ENCODE measurements at regions of chr20 and their contacts with region 1.

Region 1: DNA sequence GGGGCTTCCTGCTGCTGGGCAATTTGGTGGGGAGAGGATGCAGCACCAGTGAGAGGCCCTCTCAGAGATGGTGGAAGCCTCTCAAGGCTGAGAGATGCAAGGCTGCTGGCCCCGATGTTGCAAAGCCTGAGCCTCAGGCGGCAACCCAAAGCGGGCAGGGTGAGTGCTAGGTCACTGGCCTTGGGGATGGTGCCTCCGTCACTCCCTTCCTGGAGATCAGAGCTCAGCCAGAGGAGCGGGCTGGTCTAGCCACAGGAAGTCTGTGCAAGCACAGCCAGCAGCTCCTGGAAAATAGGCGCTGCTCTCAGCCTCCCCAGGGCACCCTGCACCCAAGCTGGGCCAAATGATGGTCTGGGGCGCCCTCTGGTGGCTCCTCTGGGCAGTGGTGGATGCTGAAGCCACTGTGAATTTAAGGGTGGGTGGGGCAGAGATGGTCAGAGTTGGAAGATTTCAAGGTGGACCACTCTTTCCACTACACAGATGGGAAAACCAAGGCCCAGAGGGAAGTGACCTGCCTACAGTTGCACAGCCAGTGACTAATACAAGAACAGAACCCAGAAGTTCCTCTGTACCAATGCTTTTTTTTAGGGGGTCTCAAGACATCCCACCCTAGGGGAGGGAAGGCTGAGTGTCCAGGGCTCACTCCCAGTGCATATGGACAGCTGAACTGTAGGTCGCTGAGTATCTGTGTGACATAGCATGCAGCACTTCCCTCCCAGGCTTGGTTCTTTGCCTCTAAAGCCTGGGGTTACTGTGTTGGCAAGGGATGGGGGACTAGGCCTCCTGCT is 20.8 kb downstream of the C20orf203 start:
- DNase-seq: peak; percentile 96
- H3K4me3 Mint-ChIP-seq: no peak overlapping the region
- H3K27ac Mint-ChIP-seq: no peak overlapping the region
- H3K4me1 Mint-ChIP-seq: peaks cover 7% of the 10 kb centered on the region
- H3K27me3 Mint-ChIP-seq: no peaks in the 10 kb centered on the region

Region 2: GRCh38 chr20:32521780-32522525 is 131.0 kb before region 1 on chr20:
- intact Hi-C with region 1: loop called (anchors 1 kb)
- DNase-seq: peak; percentile 91
- H3K4me3 Mint-ChIP-seq: peak overlapping the region; percentile 15
- H3K27ac Mint-ChIP-seq: peak overlapping the region; percentile 60
- H3K4me1 Mint-ChIP-seq: peaks cover 46% of the 10 kb centered on the region
- H3K27me3 Mint-ChIP-seq: no peaks in the 10 kb centered on the region

Region 3: GRCh38 chr20:32585011-32585518 is 67.9 kb before region 1 on chr20 and contains the start of gene NOL4L:
- intact Hi-C with region 1: loop called (anchors 5 kb)
- DNase-seq: peak; percentile 79
- H3K4me3 Mint-ChIP-seq: peak within 1 kb of the TSS; percentile 81
- H3K27ac Mint-ChIP-seq: peak within 1 kb of the TSS; percentile 77
- H3K4me1 Mint-ChIP-seq: peaks cover 34% of the 10 kb centered on the region
- H3K27me3 Mint-ChIP-seq: peaks cover 25% of the 10 kb centered on the region
- total RNA-seq, gene NOL4L: 13.0 and 18.0 TPM in 2 replicates